HepG2 (cell line): ENCODE measurements at regions of chr20 and their contacts with region 1.

Region 1: DNA sequence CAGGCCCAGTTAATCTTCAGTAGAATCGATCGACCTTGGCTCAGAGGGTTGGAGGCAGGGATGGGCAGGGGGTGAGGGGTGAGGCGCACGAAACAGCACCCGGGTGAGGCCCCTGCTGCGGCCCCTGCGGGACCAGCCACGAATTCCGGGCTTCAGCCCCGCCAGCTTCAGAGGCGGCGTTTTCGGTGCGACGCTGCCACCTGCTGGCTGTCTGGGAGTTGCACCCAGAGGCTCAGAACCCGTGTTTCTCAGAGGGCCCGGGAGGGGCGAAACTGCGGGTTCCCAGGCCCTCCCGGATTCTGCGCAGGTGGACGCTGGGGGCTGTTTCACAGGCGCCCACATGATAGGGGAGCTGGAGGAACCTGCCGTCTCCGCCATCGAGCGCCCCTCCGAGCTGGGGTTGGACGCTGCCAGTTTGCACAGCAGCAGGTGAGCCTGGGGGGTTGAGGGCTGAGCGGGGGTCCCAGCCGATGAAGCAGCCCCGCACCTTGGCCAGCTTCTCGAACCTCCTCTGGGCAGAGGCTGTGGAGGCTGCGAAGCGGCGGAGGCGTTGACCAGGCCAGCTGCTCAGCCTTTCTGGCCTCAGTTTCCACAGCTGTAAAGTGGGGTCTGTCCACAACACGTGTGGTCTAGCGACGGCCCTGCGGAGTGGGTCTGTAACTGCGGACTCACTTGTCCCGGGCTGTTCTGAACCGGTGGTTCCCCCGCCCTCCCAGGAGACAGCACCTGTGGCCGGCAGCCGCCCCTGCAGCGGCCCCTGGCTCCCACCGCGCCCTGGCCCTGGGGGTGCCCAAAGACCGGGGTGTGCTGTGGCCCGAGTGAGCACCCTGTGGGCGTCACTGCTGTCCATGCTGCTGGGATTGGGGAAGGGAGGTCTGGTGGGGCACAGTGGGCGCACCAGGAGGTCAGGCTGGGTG is 2.5 kb upstream of the BHLHE23 start:
- DNase-seq: peak; percentile 63
- ATAC-seq: peak; percentile 88
- H3K4me3 ChIP-seq: peak overlapping the region in 1 of 3 experiments; percentile 57; a peak in 3 of 6 replicates
- H3K27ac ChIP-seq: no peak overlapping the region
- H3K4me1 ChIP-seq: peaks cover 20% of the 10 kb centered on the region
- H3K27me3 ChIP-seq: peaks cover 31 to 94% of the 10 kb centered on the region in 2 experiments
- CTCF ChIP-seq: peak; percentile 100
- EP300 ChIP-seq: peak in 1 of 2 experiments; percentile 44; a peak in 1 of 4 replicates
- POLR2A ChIP-seq: no peak
- RAD21 ChIP-seq: peak; percentile 99

Region 2: DNA sequence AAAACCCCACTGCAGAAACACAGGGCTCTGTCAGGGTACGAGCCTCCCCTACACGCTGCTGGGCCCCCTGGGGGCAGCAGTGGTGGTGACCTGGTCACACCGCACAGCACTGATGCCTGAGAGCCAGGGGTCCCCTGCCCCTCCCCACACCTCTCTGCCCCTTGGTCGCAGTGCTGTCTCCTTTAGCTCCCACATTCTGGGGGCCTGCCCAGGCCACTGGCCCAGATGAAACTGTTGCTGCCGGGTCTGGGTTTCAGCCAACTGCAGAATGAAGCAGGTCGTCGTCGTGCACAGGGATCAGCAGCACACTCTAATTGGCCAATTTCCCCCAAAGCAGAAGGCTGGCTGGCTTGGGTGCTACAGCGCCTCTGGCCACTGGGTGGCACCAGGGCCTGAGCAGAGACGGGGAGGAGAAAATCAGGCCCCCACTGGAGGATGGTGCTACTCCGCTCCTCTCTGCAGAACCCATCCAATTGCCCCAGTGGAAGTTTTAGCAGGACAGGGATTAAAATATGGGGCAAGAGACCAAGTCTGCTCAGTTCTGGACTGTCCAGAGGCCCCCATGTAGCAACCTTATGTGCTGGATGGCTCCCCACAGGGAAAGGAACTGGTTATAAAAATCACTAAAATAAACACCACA is 109.1 kb before region 1 on chr20:
- CTCF ChIA-PET with region 1: interaction called, 30 read pairs
- POLR2A ChIA-PET with region 1: interaction called, 3 read pairs
- in situ Hi-C with region 1: no loop called
- intact Hi-C with region 1: loop called (anchors 2 kb)
- DNase-seq: peak; percentile 82
- ATAC-seq: peak; percentile 90
- H3K4me3 ChIP-seq: peak overlapping the region in 1 of 3 experiments; percentile 44; a peak in 2 of 6 replicates
- H3K27ac ChIP-seq: peak overlapping the region; percentile 23
- H3K4me1 ChIP-seq: peaks cover 32% of the 10 kb centered on the region
- H3K27me3 ChIP-seq: no peaks in the 10 kb centered on the region
- CTCF ChIP-seq: peak; percentile 98
- EP300 ChIP-seq: 0 out of 4 replicates have a peak, but pooled peaks of 1 of the 2 experiments have one; percentile 2
- POLR2A ChIP-seq: peak in 1 of 2 experiments; percentile 78; a peak in 2 of 4 replicates
- RAD21 ChIP-seq: peak; percentile 95

Region 3: GRCh38 chr20:62907384-62908317 is 101.7 kb before region 1 on chr20:
- CTCF ChIA-PET with region 1: interaction called, 11 read pairs
- POLR2A ChIA-PET with region 1: interaction called, 3 read pairs
- in situ Hi-C with region 1: no loop called
- intact Hi-C with region 1: no loop called
- DNase-seq: peak; percentile 58
- ATAC-seq: peak; percentile 75
- H3K4me3 ChIP-seq: no peak overlapping the region
- H3K27ac ChIP-seq: no peak overlapping the region
- H3K4me1 ChIP-seq: peaks cover 1% of the 10 kb centered on the region
- H3K27me3 ChIP-seq: no peaks in the 10 kb centered on the region
- CTCF ChIP-seq: peak; percentile 77
- EP300 ChIP-seq: no peak
- POLR2A ChIP-seq: no peak
- RAD21 ChIP-seq: peak; percentile 79

Region 4: GRCh38 chr20:62972270-62973032 is 36.9 kb before region 1 on chr20:
- CTCF ChIA-PET with region 1: interaction called, 42 read pairs
- POLR2A ChIA-PET with region 1: interaction called, 5 read pairs
- in situ Hi-C with region 1: no loop called
- intact Hi-C with region 1: loop called (anchors 1 kb)
- DNase-seq: peak; percentile 79
- ATAC-seq: peak; percentile 63
- H3K4me3 ChIP-seq: peak overlapping the region; percentile 1 to 65 (median 48); a peak in 4 of 6 replicates
- H3K27ac ChIP-seq: no peak overlapping the region
- H3K4me1 ChIP-seq: peaks cover 45% of the 10 kb centered on the region
- H3K27me3 ChIP-seq: peaks cover 30 to 63% of the 10 kb centered on the region in 2 experiments
- CTCF ChIP-seq: peak; percentile 100
- EP300 ChIP-seq: no peak
- POLR2A ChIP-seq: no peak
- RAD21 ChIP-seq: peak; percentile 99

Region 5: GRCh38 chr20:62984666-62985443 is 24.4 kb before region 1 on chr20:
- CTCF ChIA-PET with region 1: no interaction called
- POLR2A ChIA-PET with region 1: no interaction called
- in situ Hi-C with region 1: no loop called
- intact Hi-C with region 1: no loop called
- DNase-seq: no peak
- ATAC-seq: no peak
- H3K4me3 ChIP-seq: no peak overlapping the region
- H3K27ac ChIP-seq: no peak overlapping the region
- H3K4me1 ChIP-seq: no peaks in the 10 kb centered on the region
- H3K27me3 ChIP-seq: peaks cover 49 to 91% of the 10 kb centered on the region in 2 experiments
- CTCF ChIP-seq: no peak
- EP300 ChIP-seq: no peak
- POLR2A ChIP-seq: no peak
- RAD21 ChIP-seq: no peak